ENCODE measurements at regions of chr14 and their contacts with region 1.

Region 1: GRCh38 chr14:98138666-98139065 is 1133.3 kb downstream of the BCL11B start:
- DNase-seq: peak; percentile 50
- H3K4me3 ChIP-seq: no peak overlapping the region
- H3K27ac ChIP-seq: no peak overlapping the region
- H3K4me1 ChIP-seq: no peaks in the 10 kb centered on the region
- H3K27me3 ChIP-seq: peaks cover 3% of the 10 kb centered on the region
- CTCF ChIP-seq: peak; percentile 50

Region 2: GRCh38 chr14:99266181-99267178 is 1127.8 kb after region 1 on chr14:
- intact Hi-C with region 1: loop called (anchors 2 kb)
- DNase-seq: peak; percentile 81
- H3K4me3 ChIP-seq: no peak overlapping the region
- H3K27ac ChIP-seq: no peak overlapping the region
- H3K4me1 ChIP-seq: no peaks in the 10 kb centered on the region
- H3K27me3 ChIP-seq: peaks cover 13% of the 10 kb centered on the region
- CTCF ChIP-seq: peak; percentile 96